ENCODE measurements at regions of chr15 and their contacts with region 1.

Region 1: DNA sequence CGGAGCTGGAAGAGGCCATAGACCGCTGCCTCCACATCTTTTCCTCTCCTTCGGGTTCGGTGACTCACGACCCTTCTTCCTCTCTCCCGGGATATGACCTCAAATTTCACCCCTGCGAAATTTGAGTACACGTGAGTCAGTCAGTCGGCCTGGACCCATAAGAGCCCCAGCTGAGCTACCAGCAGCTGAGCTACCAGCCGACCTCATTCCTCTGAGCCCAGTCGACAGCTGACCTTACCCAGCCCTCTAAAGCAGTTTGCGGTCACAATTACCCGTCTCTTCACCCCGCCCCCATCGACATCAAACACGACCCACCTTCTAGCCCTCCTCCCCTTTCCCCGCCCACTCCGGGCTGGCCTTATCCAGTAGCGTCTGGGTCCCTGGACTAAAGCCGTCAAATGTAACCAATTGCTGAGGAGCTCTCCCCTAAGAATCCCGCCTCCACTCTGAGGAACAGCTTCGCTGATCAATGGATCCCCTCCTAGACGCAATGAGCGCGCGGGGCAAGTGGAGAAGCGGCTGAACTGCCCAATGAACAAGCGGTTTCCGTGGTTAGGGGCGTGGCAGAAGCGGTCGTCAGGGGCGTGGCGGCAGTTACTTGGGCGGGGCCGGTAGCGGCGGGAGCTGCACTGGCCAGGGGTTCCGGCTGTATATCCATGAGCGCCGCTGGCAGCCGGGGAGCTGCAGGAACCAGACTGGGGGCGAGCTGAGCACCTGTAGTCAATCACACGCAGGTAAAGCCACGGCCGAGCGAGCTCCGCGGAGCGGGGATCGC is at the start of gene ABHD2:
- DNase-seq: peak; percentile 99
- ATAC-seq: peak; percentile 98
- H3K4me3 Mint-ChIP-seq: no peak within 1 kb of the TSS
- H3K27ac Mint-ChIP-seq: peak within 1 kb of the TSS; percentile 9
- H3K4me1 Mint-ChIP-seq: peaks cover 36% of the 10 kb centered on the region
- H3K27me3 Mint-ChIP-seq: no peaks in the 10 kb centered on the region
- total RNA-seq, gene ABHD2: 41.5 to 52.1 TPM

Region 2: GRCh38 chr15:88897456-88898194 is 190.4 kb before region 1 on chr15:
- CTCF ChIA-PET with region 1: interaction called, 5 read pairs
- POLR2A ChIA-PET with region 1: interaction called, 4 read pairs
- intact Hi-C with region 1: loop called in 1 of 2 experiments (anchors 5 kb)
- DNase-seq: peak; percentile 86
- ATAC-seq: peak; percentile 80
- H3K4me3 Mint-ChIP-seq: no peak overlapping the region
- H3K27ac Mint-ChIP-seq: no peak overlapping the region
- H3K4me1 Mint-ChIP-seq: peaks cover 35% of the 10 kb centered on the region
- H3K27me3 Mint-ChIP-seq: no peaks in the 10 kb centered on the region

Region 3: DNA sequence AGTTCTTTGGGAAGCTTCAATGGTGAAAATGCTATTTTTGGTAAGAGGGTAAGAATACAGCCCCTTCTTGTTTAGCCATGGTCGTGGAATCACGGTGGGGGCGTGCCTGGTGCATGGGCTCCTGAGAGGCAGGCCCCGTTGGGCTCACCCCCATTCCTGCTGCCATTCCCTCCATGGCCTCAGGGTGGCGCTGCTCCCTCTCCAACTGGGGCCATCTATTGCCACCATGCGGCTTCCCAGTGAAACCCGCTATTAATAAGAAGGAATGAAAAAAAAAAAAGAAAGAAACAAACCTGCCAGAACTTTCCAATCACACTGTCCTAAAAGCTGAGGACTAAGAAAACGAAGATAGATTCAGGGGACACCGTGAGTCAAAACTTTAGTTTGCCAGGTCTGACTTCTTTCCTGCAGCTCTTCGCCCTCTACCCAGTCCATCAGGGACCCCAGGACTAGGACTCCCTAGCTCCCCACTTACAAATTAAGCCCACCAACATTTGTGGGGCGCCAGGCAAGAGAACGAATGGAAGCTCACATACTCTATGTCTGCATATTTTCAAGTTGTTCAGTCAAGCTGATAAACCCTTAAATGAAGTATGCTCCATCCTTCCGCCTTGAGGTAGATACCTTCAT is 30.4 kb before region 1 on chr15:
- CTCF ChIA-PET with region 1: interaction called, 22 read pairs
- POLR2A ChIA-PET with region 1: interaction called, 3 read pairs
- intact Hi-C with region 1: no loop called
- DNase-seq: peak; percentile 90
- ATAC-seq: peak; percentile 96
- H3K4me3 Mint-ChIP-seq: no peak overlapping the region
- H3K27ac Mint-ChIP-seq: no peak overlapping the region
- H3K4me1 Mint-ChIP-seq: peaks cover 7% of the 10 kb centered on the region
- H3K27me3 Mint-ChIP-seq: no peaks in the 10 kb centered on the region

Region 4: DNA sequence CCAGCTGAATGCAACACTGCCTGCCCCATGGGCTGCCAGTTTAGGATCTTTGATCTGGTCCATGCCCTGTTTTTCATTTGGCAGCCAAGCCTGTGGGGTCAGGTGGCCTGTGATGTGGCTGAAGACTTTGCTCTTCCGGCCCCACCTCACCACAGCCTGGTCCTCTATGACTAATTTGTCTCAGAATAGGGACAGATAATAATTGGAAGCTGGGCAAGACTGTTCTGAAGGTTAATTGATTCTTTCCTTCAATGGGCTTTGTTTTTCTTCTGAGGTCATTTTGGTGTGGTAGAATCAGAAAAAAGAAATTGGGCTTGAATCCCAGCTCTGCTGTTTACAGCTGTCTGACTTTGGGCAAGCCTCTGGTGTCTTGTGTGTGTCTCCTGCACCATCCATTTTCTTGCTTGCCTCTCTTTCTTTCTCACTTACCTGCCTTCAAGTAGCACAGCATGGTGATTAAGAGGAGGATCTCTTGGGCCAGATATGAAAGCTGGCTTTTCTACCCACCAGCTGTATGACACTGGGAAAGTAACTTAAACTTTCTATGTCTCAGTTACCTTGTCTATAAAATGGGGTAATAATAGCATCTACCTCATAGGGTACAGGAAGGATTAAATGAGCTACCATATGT is 24.4 kb after region 1 on chr15:
- CTCF ChIA-PET with region 1: interaction called, 10 read pairs
- POLR2A ChIA-PET with region 1: interaction called, 3 read pairs
- intact Hi-C with region 1: no loop called
- DNase-seq: no peak
- ATAC-seq: peak; percentile 30
- H3K4me3 Mint-ChIP-seq: no peak overlapping the region
- H3K27ac Mint-ChIP-seq: no peak overlapping the region
- H3K4me1 Mint-ChIP-seq: peaks cover 20% of the 10 kb centered on the region
- H3K27me3 Mint-ChIP-seq: no peaks in the 10 kb centered on the region

Region 5: DNA sequence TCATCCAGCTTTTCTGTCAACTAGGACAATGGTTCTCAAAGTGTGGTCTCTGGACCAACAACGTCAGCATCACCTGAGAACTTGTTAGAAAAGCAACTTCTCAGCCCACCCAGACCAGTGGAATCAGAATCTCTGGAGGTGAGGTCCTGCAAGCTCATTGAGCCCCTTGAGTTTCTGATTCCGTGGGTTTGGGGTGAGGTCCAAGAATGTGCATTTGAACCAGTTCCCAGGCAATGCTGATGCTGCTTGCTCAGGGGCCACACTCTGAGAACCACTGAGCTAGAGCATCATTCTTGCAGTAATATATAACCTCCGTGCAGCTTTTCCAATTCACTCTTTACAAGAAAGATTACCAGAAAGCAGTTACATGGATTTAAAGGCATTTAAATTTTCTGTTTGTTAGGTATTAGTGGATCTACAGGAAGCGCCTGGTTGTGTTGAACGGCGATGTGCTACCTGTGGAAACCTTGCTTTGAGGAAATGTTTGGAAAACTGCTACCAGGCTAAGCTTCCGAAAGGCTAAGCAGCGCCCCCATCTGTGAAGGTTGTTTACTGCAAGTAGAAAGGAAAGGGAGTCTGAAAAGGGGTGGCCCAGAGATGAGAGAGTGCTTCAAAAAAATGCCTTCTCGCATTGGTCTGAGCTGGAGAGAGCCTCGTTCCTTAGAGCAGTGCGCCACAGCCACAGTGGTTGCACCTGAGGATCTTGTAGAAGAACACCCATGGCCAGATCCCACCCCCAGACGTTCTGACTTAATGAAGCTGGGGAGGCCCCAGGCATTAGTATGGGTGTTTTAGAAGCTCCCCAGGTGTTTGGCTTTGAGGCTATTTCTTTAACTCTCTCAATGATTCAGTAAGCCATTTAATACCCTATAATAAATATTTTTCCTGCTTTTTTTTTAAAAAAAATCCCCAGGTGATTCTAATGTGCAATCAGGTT is 83.4 kb after region 1 on chr15:
- CTCF ChIA-PET with region 1: interaction called, 38 read pairs
- POLR2A ChIA-PET with region 1: interaction called, 9 read pairs
- intact Hi-C with region 1: loop called (anchors 1 kb)
- DNase-seq: peak; percentile 65
- ATAC-seq: no peak
- H3K4me3 Mint-ChIP-seq: no peak overlapping the region
- H3K27ac Mint-ChIP-seq: no peak overlapping the region
- H3K4me1 Mint-ChIP-seq: peaks cover 30% of the 10 kb centered on the region
- H3K27me3 Mint-ChIP-seq: no peaks in the 10 kb centered on the region

Region 6: GRCh38 chr15:89334510-89335288 is 246.7 kb after region 1 on chr15 and contains the start of gene POLG:
- CTCF ChIA-PET with region 1: no interaction called
- POLR2A ChIA-PET with region 1: no interaction called
- intact Hi-C with region 1: loop called in 1 of 2 experiments (anchors 2 kb)
- DNase-seq: peak; percentile 99
- ATAC-seq: peak; percentile 92
- H3K4me3 Mint-ChIP-seq: peak within 1 kb of the TSS; percentile 80
- H3K27ac Mint-ChIP-seq: peak within 1 kb of the TSS; percentile 87
- H3K4me1 Mint-ChIP-seq: peaks cover 56% of the 10 kb centered on the region
- H3K27me3 Mint-ChIP-seq: peaks cover 2% of the 10 kb centered on the region
- total RNA-seq, gene POLG: 63.2 to 80.4 TPM

Region 7: GRCh38 chr15:89352476-89352875 is 264.5 kb after region 1 on chr15:
- CTCF ChIA-PET with region 1: no interaction called
- POLR2A ChIA-PET with region 1: no interaction called
- intact Hi-C with region 1: no loop called
- DNase-seq: no peak
- ATAC-seq: no peak
- H3K4me3 Mint-ChIP-seq: no peak overlapping the region
- H3K27ac Mint-ChIP-seq: no peak overlapping the region
- H3K4me1 Mint-ChIP-seq: peaks cover 10% of the 10 kb centered on the region
- H3K27me3 Mint-ChIP-seq: peaks cover 24% of the 10 kb centered on the region

Measured in activated CD4-positive, alpha-beta T cell treated with anti-CD3 and anti-CD28 coated beads for 36 hours (primary cell).